CD4-positive, alpha-beta T cell (primary cell): ENCODE measurements at regions of chr7 and their contacts with region 1.

Region 1: DNA sequence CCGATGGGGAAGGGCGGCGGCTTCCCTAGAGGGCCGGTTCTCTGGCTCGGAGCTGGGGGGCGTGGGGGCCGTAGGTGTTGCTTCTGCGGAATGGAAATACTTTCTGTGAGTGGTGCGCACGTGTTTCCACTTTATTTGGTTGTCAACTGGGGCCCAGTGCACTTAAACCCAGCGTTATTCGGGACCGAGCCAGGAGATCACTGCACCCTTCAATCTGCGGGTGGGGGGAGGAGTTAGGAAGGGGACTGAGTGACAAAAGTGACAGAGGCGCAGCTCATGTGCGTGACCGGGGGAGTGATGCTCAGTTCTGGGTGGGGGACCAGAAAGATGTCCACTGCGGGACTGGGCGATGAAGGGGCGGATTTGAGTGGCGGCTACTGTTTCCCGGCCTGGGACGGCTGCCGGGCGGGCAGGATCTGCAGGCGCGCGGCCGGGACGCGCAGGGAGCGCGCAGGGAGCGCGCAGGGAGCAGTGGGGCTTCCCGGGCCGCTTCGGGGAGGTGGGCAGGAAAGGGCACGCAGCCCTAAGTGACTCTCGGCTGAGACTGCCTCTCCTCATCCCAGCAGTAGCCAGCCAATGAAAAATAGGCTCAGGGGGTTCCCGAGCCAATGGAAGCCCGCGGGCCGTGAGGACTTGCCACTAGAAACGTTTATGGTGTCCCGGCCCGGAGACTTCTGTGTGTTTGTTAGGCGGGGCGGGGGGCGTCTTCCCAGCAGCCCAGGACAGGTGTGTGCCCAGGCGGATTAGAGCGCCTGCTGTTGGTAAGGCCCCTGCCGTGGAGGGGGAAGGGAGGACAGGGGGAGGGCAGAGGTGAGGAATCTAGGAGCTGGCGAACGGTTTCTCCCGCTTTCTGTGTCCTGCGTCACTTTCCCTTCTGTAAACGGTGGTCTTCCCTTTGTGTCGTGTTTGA is 54.3 kb upstream of the KDM7A start:
- DNase-seq: peak; percentile 23 to 80 (median 54)
- ATAC-seq: peak; percentile 17
- H3K4me3 ChIP-seq: peak overlapping the region; percentile 70
- H3K4me3 Mint-ChIP-seq: peak overlapping the region; percentile 88
- H3K27ac ChIP-seq: peak overlapping the region; percentile 84 to 97
- H3K27ac Mint-ChIP-seq: peak overlapping the region; percentile 99
- H3K4me1 ChIP-seq: peaks cover 44% of the 10 kb centered on the region
- H3K4me1 Mint-ChIP-seq: peaks cover 46% of the 10 kb centered on the region
- H3K27me3 ChIP-seq: no peaks in the 10 kb centered on the region
- H3K27me3 Mint-ChIP-seq: no peaks in the 10 kb centered on the region
- CTCF ChIP-seq: no peak

Region 2: GRCh38 chr7:139777948-139778841 is 452.9 kb before region 1 on chr7 and contains the start of gene HIPK2:
- CTCF ChIA-PET with region 1: no interaction called
- POLR2A ChIA-PET with region 1: no interaction called
- intact Hi-C with region 1: loop called in 1 of 2 experiments (anchors 10 kb)
- DNase-seq: peak; percentile 48 to 89 (median 64)
- ATAC-seq: peak; percentile 59
- H3K4me3 ChIP-seq: peak within 1 kb of the TSS; percentile 87
- H3K4me3 Mint-ChIP-seq: peak within 1 kb of the TSS; percentile 99
- H3K27ac ChIP-seq: peak within 1 kb of the TSS; percentile 71 to 80
- H3K27ac Mint-ChIP-seq: peak within 1 kb of the TSS; percentile 93
- H3K4me1 ChIP-seq: peaks cover 30% of the 10 kb centered on the region
- H3K4me1 Mint-ChIP-seq: peaks cover 48% of the 10 kb centered on the region
- H3K27me3 ChIP-seq: peaks cover 0 to under 1% of the 10 kb centered on the region in 2 experiments
- H3K27me3 Mint-ChIP-seq: no peaks in the 10 kb centered on the region
- CTCF ChIP-seq: no peak
- total RNA-seq, gene HIPK2: 36.5 to 37.0 TPM

Region 3: DNA sequence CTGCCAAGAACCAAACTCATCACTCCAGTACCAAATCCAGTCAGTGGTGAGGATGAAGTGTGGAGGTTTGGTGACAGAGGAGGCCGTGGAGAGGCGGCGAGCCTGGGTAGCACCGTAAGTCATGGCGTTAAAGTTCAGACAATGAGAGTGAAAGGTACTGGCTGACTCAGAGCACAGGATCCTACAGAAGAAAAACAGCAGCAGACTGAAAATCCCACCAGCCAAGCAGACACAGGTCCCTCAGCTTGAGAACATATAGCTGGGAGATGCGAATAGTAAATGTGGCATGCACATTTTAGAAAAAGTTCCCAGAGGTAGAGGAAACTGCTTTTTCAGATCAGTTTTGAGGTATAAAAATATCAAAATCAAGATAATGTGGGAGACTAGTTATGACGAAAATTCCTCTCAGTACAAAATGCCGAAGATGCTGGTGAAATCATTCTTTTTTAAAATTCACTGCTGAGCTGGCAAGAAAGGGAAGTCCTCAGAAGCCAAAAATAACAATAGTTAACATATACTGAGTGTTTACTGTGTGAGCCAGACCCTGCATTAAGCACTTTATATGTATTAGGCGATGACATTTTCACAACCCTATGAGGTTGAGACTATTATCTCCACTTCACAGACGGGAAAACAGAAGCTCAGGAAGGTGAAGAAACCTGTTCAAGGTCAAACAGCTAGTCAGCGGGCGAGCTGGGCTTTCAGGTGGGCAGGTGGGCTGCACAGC is 189.3 kb before region 1 on chr7:
- CTCF ChIA-PET with region 1: no interaction called
- POLR2A ChIA-PET with region 1: no interaction called
- intact Hi-C with region 1: no loop called
- DNase-seq: no peak
- ATAC-seq: no peak
- H3K4me3 ChIP-seq: no peak overlapping the region
- H3K4me3 Mint-ChIP-seq: no peak overlapping the region
- H3K27ac ChIP-seq: no peak overlapping the region
- H3K27ac Mint-ChIP-seq: no peak overlapping the region
- H3K4me1 ChIP-seq: peaks cover 8% of the 10 kb centered on the region
- H3K4me1 Mint-ChIP-seq: peaks cover 24% of the 10 kb centered on the region
- H3K27me3 ChIP-seq: no peaks in the 10 kb centered on the region
- H3K27me3 Mint-ChIP-seq: no peaks in the 10 kb centered on the region
- CTCF ChIP-seq: no peak

Region 4: DNA sequence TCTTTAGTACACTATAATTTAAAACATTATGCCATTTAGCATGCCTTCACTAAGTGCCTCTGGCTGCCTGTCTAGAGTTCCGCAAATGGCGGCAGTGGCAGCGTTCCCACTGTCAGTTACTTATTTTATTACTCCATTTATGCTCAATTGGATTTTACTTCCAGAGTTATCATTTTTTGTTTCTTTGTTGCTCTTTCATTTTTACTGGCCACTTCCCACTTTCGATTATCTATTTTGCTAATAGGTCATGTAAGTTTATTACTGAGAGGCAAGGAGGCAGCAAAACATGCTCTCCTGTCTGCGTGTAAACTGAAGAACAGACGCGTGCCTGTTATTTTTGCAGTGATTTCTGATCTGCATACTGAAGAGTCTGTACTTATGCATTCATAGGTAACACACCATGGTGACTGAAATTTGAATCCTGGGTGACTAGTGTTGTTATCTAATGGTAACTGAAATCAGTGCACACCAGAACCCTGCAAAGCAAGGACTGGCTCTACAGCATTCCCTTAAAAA is 77.4 kb before region 1 on chr7:
- CTCF ChIA-PET with region 1: no interaction called
- POLR2A ChIA-PET with region 1: no interaction called
- intact Hi-C with region 1: no loop called
- DNase-seq: no peak
- ATAC-seq: no peak
- H3K4me3 ChIP-seq: no peak overlapping the region
- H3K4me3 Mint-ChIP-seq: no peak overlapping the region
- H3K27ac ChIP-seq: no peak overlapping the region
- H3K27ac Mint-ChIP-seq: no peak overlapping the region
- H3K4me1 ChIP-seq: peaks cover 14% of the 10 kb centered on the region
- H3K4me1 Mint-ChIP-seq: peaks cover 82% of the 10 kb centered on the region
- H3K27me3 ChIP-seq: no peaks in the 10 kb centered on the region
- H3K27me3 Mint-ChIP-seq: no peaks in the 10 kb centered on the region
- CTCF ChIP-seq: no peak

Region 5: GRCh38 chr7:140168816-140169215 is 62.3 kb before region 1 on chr7:
- CTCF ChIA-PET with region 1: no interaction called
- POLR2A ChIA-PET with region 1: interaction called, 394 read pairs
- intact Hi-C with region 1: no loop called
- DNase-seq: no peak
- ATAC-seq: no peak
- H3K4me3 ChIP-seq: no peak overlapping the region
- H3K4me3 Mint-ChIP-seq: no peak overlapping the region
- H3K27ac ChIP-seq: no peak overlapping the region
- H3K27ac Mint-ChIP-seq: no peak overlapping the region
- H3K4me1 ChIP-seq: peaks cover 32% of the 10 kb centered on the region
- H3K4me1 Mint-ChIP-seq: peaks cover 89% of the 10 kb centered on the region
- H3K27me3 ChIP-seq: no peaks in the 10 kb centered on the region
- H3K27me3 Mint-ChIP-seq: no peaks in the 10 kb centered on the region
- CTCF ChIP-seq: no peak

Region 6: DNA sequence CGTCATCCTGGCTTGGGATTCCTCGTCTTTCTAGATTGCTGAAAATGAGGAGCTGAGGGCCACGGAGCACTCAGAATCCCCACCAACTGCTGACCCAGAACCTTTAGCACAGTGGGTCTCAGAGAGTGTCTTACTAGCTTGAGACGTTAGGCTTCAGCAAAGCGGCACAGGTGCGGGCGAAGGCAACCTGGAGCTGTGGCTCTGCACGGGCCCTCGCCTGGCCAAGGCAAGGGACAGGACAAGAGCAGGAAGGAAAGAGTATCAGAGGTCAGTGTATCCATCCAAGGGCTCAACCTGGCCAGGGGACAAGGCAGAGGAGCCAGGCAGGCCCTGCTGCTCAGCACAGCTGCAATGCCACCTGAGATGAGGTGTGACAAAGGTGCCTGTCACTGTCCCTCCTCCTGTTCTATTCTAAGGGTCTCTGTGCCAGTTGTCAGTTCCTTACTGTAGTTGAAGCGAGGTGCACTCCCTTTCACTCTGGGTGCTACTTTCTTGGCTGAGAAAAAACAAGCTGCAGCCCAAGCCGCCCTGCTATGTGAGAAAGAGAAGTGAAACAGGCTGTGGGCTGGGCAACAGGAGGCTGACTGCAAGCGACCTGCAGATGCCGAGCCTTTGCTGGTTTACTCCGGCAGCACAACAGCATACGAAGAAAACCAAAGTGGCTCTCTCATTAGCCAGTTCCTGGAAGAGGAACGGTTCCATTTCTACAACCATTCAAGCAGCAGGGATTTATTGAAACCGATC is 21.1 kb before region 1 on chr7:
- CTCF ChIA-PET with region 1: interaction called, 3 read pairs
- POLR2A ChIA-PET with region 1: interaction called, 13 read pairs
- intact Hi-C with region 1: no loop called
- DNase-seq: peak in 11 of 14 experiments; percentile 15 to 66 (median 39)
- ATAC-seq: peak; percentile 74
- H3K4me3 ChIP-seq: peak overlapping the region; percentile 28
- H3K4me3 Mint-ChIP-seq: peak overlapping the region; percentile 56
- H3K27ac ChIP-seq: no peak overlapping the region
- H3K27ac Mint-ChIP-seq: peak overlapping the region; percentile 30
- H3K4me1 ChIP-seq: peaks cover 44% of the 10 kb centered on the region
- H3K4me1 Mint-ChIP-seq: peaks cover 65% of the 10 kb centered on the region
- H3K27me3 ChIP-seq: no peaks in the 10 kb centered on the region
- H3K27me3 Mint-ChIP-seq: no peaks in the 10 kb centered on the region
- CTCF ChIP-seq: no peak

Region 7: GRCh38 chr7:140249036-140249806 is 18.1 kb after region 1 on chr7:
- CTCF ChIA-PET with region 1: interaction called, 5 read pairs
- POLR2A ChIA-PET with region 1: interaction called, 24 read pairs
- intact Hi-C with region 1: no loop called
- DNase-seq: no peak
- ATAC-seq: no peak
- H3K4me3 ChIP-seq: no peak overlapping the region
- H3K4me3 Mint-ChIP-seq: no peak overlapping the region
- H3K27ac ChIP-seq: no peak overlapping the region
- H3K27ac Mint-ChIP-seq: no peak overlapping the region
- H3K4me1 ChIP-seq: peaks cover 24% of the 10 kb centered on the region
- H3K4me1 Mint-ChIP-seq: peaks cover 15% of the 10 kb centered on the region
- H3K27me3 ChIP-seq: no peaks in the 10 kb centered on the region
- H3K27me3 Mint-ChIP-seq: no peaks in the 10 kb centered on the region
- CTCF ChIP-seq: no peak

Region 8: GRCh38 chr7:140304191-140304799 is 73.2 kb after region 1 on chr7:
- CTCF ChIA-PET with region 1: interaction called, 3 read pairs
- POLR2A ChIA-PET with region 1: interaction called, 7 read pairs
- intact Hi-C with region 1: loop called (anchors 1 to 5 kb)
- DNase-seq: peak in 13 of 14 experiments; percentile 7 to 79 (median 34)
- ATAC-seq: peak; percentile 95
- H3K4me3 ChIP-seq: no peak overlapping the region
- H3K4me3 Mint-ChIP-seq: no peak overlapping the region
- H3K27ac ChIP-seq: no peak overlapping the region
- H3K27ac Mint-ChIP-seq: peak overlapping the region; percentile 21
- H3K4me1 ChIP-seq: peaks cover 4% of the 10 kb centered on the region
- H3K4me1 Mint-ChIP-seq: peaks cover 6% of the 10 kb centered on the region
- H3K27me3 ChIP-seq: no peaks in the 10 kb centered on the region
- H3K27me3 Mint-ChIP-seq: no peaks in the 10 kb centered on the region
- CTCF ChIP-seq: peak; percentile 66

Region 9: GRCh38 chr7:141333459-141333858 is 1102.3 kb after region 1 on chr7:
- CTCF ChIA-PET with region 1: no interaction called
- POLR2A ChIA-PET with region 1: no interaction called
- intact Hi-C with region 1: no loop called
- DNase-seq: no peak
- ATAC-seq: no peak
- H3K4me3 ChIP-seq: no peak overlapping the region
- H3K4me3 Mint-ChIP-seq: no peak overlapping the region
- H3K27ac ChIP-seq: no peak overlapping the region
- H3K27ac Mint-ChIP-seq: no peak overlapping the region
- H3K4me1 ChIP-seq: no peaks in the 10 kb centered on the region
- H3K4me1 Mint-ChIP-seq: no peaks in the 10 kb centered on the region
- H3K27me3 ChIP-seq: no peaks in the 10 kb centered on the region
- H3K27me3 Mint-ChIP-seq: peaks cover 5% of the 10 kb centered on the region
- CTCF ChIP-seq: no peak